Panc1 (cell line): ENCODE measurements at regions of chr6 and their contacts with region 1.

Region 1: DNA sequence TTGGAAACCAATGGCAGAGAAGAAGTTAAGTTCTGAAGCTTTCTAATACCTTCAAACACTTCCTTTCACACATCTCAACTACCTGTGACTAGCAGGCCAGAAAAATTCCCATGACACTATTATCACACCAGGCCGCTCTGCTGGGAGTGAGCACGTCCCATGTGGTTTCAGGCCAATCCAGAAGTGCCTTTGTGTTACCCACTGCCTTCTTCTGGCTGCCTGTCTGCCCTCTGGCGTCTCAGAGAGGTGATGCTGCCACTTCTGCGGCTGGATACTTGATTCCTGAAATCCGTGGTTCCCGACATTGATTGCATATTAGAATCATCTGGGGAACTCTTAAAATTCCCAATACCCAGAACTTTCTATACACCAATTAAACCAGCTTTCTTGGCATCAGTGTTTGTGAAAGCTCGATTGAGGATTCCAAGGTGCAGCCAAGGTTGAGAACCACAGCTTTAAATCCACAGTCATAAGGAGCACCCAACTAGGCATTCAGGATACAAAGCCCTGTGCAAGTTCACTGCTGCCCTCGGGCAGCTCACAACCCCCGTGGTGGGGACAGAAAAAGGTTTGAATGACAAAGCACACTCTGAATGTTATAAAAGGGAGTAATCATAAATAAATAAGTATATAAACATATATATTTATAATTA is 65.6 kb downstream of the STMND1 start:
- DNase-seq: no peak
- ATAC-seq: peak; percentile 99
- H3K4me3 ChIP-seq: no peak overlapping the region
- H3K27ac ChIP-seq: no peak overlapping the region
- H3K4me1 ChIP-seq: peaks cover 2% of the 10 kb centered on the region; the same call in 1 of the 2 replicates
- H3K27me3 ChIP-seq: no peaks in the 10 kb centered on the region
- CTCF ChIP-seq: peak; percentile 80

Region 2: DNA sequence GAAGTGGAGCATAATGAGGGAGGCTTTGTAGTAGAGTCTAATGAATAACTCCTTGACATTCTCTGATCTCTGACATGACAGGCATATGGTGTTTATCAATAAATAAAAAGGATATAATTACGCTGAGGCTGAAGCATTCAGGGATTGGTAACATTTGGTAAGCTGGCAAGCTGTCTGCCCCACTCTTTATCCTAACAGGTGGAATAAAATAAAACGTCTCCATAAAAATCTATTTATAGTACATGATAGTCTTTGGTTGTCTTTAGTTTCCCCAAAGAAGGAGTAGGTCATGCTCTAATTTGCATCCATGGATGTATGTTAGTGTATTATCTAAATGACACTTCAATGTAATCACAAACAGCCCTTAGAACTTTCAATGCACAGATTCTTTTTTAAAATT is 82.8 kb after region 1 on chr6:
- CTCF ChIA-PET with region 1: no interaction called
- POLR2A ChIA-PET with region 1: interaction called, 14 read pairs
- in situ Hi-C with region 1: no loop called
- intact Hi-C with region 1: no loop called
- DNase-seq: no peak
- ATAC-seq: no peak
- H3K4me3 ChIP-seq: no peak overlapping the region
- H3K27ac ChIP-seq: no peak overlapping the region
- H3K4me1 ChIP-seq: no peaks in the 10 kb centered on the region
- H3K27me3 ChIP-seq: no peaks in the 10 kb centered on the region
- CTCF ChIP-seq: no peak

Region 3: DNA sequence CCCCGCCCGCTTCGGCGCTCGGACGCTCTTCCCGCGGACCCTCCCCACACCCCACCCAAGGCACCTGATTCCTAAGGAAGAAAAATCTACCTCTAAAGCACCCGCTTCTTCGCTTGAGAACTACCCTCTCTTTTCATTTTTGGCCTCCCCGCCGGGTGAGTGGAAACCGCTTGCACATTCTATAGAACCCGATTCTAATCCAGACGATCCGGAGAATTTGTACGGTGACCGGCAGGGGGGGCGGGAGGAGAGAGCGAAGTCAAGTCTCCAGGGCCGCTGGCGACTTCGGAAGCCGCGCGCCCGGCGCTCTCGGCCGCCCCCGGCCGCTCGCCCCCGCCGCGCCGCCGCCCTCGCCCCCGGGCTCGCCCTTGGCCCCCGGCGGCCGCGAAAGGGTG is 113.6 kb after region 1 on chr6 and contains the start of gene RBM24:
- CTCF ChIA-PET with region 1: no interaction called
- POLR2A ChIA-PET with region 1: no interaction called
- in situ Hi-C with region 1: no loop called
- intact Hi-C with region 1: loop called (anchors 5 kb)
- DNase-seq: no peak
- ATAC-seq: peak; percentile 73
- H3K4me3 ChIP-seq: peak within 1 kb of the TSS; percentile 83 to 89
- H3K27ac ChIP-seq: peak within 1 kb of the TSS; percentile 89
- H3K4me1 ChIP-seq: peaks cover 31% of the 10 kb centered on the region
- H3K27me3 ChIP-seq: no peaks in the 10 kb centered on the region
- CTCF ChIP-seq: peak; percentile 68
- total RNA-seq, gene RBM24: 23.0 TPM